ENCODE measurements at regions of chr15 and their contacts with region 1.

Region 1: GRCh38 chr15:59622289-59622688 is 10.7 kb downstream of the GCNT3 start:
- DNase-seq: peak; percentile 86
- ATAC-seq: peak; percentile 100
- H3K4me3 ChIP-seq: no peak overlapping the region
- H3K27ac ChIP-seq: no peak overlapping the region
- H3K4me1 ChIP-seq: no peaks in the 10 kb centered on the region
- H3K27me3 ChIP-seq: no peaks in the 10 kb centered on the region
- CTCF ChIP-seq: peak; percentile 70

Region 2: GRCh38 chr15:59063042-59063441 is 559.2 kb before region 1 on chr15:
- CTCF ChIA-PET with region 1: no interaction called
- POLR2A ChIA-PET with region 1: no interaction called
- intact Hi-C with region 1: no loop called
- DNase-seq: no peak
- ATAC-seq: no peak
- H3K4me3 ChIP-seq: no peak overlapping the region
- H3K27ac ChIP-seq: no peak overlapping the region
- H3K4me1 ChIP-seq: no peaks in the 10 kb centered on the region
- H3K27me3 ChIP-seq: no peaks in the 10 kb centered on the region
- CTCF ChIP-seq: no peak

Region 3: GRCh38 chr15:59247364-59247763 is 374.9 kb before region 1 on chr15:
- CTCF ChIA-PET with region 1: no interaction called
- POLR2A ChIA-PET with region 1: no interaction called
- intact Hi-C with region 1: no loop called
- DNase-seq: peak; percentile 72
- ATAC-seq: peak; percentile 79
- H3K4me3 ChIP-seq: no peak overlapping the region
- H3K27ac ChIP-seq: no peak overlapping the region
- H3K4me1 ChIP-seq: 0 out of 2 replicates have a peak, but pooled peaks cover 11% of the 10 kb centered on the region
- H3K27me3 ChIP-seq: no peaks in the 10 kb centered on the region
- CTCF ChIP-seq: peak; percentile 72

Region 4: DNA sequence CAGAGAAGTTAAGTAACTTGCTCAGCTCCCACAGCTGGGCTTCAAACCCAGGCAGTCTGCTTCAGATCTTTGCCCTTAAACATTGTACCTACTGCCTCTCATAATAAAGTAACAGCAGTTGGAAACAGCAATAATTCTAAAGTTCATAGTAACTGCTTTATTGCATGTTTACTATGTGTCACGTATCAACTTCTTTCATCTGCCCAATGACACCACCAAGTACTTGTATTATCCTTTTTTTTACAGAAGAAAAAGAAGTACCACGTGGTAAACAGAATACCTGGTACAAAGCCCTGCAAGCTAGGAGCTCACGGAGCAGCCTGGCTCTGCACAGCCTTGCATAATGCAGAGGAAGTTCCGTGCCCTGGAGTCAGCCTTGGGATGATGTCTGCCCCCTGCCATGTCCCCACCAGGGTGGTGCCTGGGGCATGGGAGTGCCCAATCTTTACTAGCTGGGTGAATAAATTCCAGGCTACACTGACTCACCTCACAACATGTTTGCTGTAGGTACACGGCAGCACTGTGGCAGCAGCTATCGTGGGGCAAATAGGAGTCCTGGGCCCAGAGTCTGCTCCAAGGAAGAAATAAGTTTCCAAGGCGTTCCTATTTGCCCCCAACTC is 338.5 kb before region 1 on chr15:
- CTCF ChIA-PET with region 1: no interaction called
- POLR2A ChIA-PET with region 1: no interaction called
- intact Hi-C with region 1: no loop called
- DNase-seq: peak; percentile 98
- ATAC-seq: peak; percentile 97
- H3K4me3 ChIP-seq: peak overlapping the region; percentile 43; the same call in 1 of the 2 replicates
- H3K27ac ChIP-seq: peak overlapping the region; percentile 97
- H3K4me1 ChIP-seq: peaks cover 54% of the 10 kb centered on the region
- H3K27me3 ChIP-seq: no peaks in the 10 kb centered on the region
- CTCF ChIP-seq: no peak

Region 5: GRCh38 chr15:59587068-59587826 is 35.0 kb before region 1 on chr15:
- CTCF ChIA-PET with region 1: interaction called, 13 read pairs
- POLR2A ChIA-PET with region 1: no interaction called
- intact Hi-C with region 1: no loop called
- DNase-seq: peak; percentile 84
- ATAC-seq: peak; percentile 76
- H3K4me3 ChIP-seq: no peak overlapping the region
- H3K27ac ChIP-seq: peak overlapping the region; percentile 69
- H3K4me1 ChIP-seq: peaks cover 8% of the 10 kb centered on the region
- H3K27me3 ChIP-seq: no peaks in the 10 kb centered on the region
- CTCF ChIP-seq: no peak

Measured in PC-3 (cell line).